Endothelial cell of umbilical vein (primary cell): ENCODE measurements at regions of chr17 and their contacts with region 1.

Region 1: DNA sequence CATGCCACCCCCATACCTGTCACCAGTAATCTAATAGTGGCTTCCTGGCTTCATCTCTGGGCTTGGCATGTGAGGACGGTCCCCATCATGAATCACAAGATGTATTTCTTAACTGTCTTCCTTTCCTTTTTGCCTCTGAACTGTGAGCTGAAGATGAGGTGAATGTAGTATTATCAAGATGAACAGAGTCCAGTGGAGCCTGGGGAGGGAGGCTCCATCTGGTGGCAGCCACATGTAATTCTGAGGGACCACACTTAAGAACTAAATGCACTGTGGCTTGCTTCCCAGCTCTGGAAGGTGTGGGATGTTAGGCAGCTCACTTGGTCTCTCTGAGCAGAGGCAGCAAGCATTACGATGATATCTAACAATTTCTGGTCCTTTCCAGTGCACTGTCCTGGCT is 354.9 kb upstream of the ASIC2 start:
- DNase-seq: no peak
- H3K4me3 ChIP-seq: no peak overlapping the region
- H3K27ac ChIP-seq: no peak overlapping the region
- H3K4me1 ChIP-seq: no peaks in the 10 kb centered on the region
- H3K27me3 ChIP-seq: no peaks in the 10 kb centered on the region
- CTCF ChIP-seq: no peak
- POLR2A ChIP-seq: no peak

Region 2: GRCh38 chr17:33712120-33712519 is 64.2 kb after region 1 on chr17:
- CTCF ChIA-PET with region 1: no interaction called
- POLR2A ChIA-PET with region 1: no interaction called
- dilution Hi-C with region 1: no loop called
- intact Hi-C with region 1: loop called (anchors 10 kb)
- DNase-seq: no peak
- H3K4me3 ChIP-seq: no peak overlapping the region
- H3K27ac ChIP-seq: no peak overlapping the region
- H3K4me1 ChIP-seq: no peaks in the 10 kb centered on the region
- H3K27me3 ChIP-seq: no peaks in the 10 kb centered on the region
- CTCF ChIP-seq: no peak
- POLR2A ChIP-seq: no peak

Region 3: GRCh38 chr17:33750943-33751701 is 103.2 kb after region 1 on chr17:
- CTCF ChIA-PET with region 1: no interaction called
- POLR2A ChIA-PET with region 1: no interaction called
- dilution Hi-C with region 1: no loop called
- intact Hi-C with region 1: no loop called
- DNase-seq: peak; percentile 64
- H3K4me3 ChIP-seq: peak overlapping the region in 1 of 3 experiments; percentile 7
- H3K27ac ChIP-seq: no peak overlapping the region
- H3K4me1 ChIP-seq: no peaks in the 10 kb centered on the region
- H3K27me3 ChIP-seq: no peaks in the 10 kb centered on the region
- CTCF ChIP-seq: peak; percentile 70 to 79
- POLR2A ChIP-seq: no peak